H1 (cell line): ENCODE measurements at regions of chr15 and their contacts with region 1.

Region 1: DNA sequence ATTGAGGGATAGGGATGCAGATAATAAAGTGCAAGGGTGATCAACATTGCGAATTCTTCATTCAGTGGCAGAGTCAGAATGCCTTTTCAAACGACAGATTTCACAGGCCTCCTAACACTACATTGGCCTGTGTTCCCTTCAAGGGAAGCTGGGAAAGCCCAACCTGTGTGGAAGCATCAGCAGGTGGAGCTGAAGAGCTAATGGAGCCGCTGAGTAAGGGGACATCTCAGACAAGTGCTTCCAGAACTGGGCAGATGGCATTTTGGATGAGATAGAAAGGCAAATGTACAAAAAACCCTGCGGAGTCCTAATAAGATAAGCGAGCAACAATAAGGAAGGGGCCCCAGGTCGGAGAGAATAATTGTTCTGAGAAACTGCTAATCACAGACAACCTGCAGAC is 8.5 kb upstream of the SLC24A5 start:
- DNase-seq: peak; percentile 29 to 57
- H3K4me3 ChIP-seq: no peak overlapping the region
- H3K27ac ChIP-seq: no peak overlapping the region
- H3K4me1 ChIP-seq: peaks cover 1 to 6% (median 2%) of the 10 kb centered on the region in 4 experiments; a peak in 4 of 7 replicates
- H3K27me3 ChIP-seq: no peaks in the 10 kb centered on the region
- CTCF ChIP-seq: peak; percentile 71 to 84 (median 81)
- EP300 ChIP-seq: no peak
- POLR2A ChIP-seq: no peak
- RAD21 ChIP-seq: peak; percentile 84 to 89

Region 2: GRCh38 chr15:48126667-48127355 is 14.6 kb after region 1 on chr15:
- CTCF ChIA-PET with region 1: interaction called, 15 read pairs
- POLR2A ChIA-PET with region 1: no interaction called
- DNase-seq: no peak
- H3K4me3 ChIP-seq: no peak overlapping the region
- H3K27ac ChIP-seq: no peak overlapping the region
- H3K4me1 ChIP-seq: peaks cover 0 to 2% (median 0%) of the 10 kb centered on the region in 4 experiments; a peak in 1 of 7 replicates
- H3K27me3 ChIP-seq: no peaks in the 10 kb centered on the region
- CTCF ChIP-seq: no peak
- EP300 ChIP-seq: no peak
- POLR2A ChIP-seq: no peak
- RAD21 ChIP-seq: no peak

Region 3: GRCh38 chr15:48250640-48251076 is 138.4 kb after region 1 on chr15:
- CTCF ChIA-PET with region 1: interaction called, 18 read pairs
- POLR2A ChIA-PET with region 1: no interaction called
- DNase-seq: peak; percentile 5 to 47
- H3K4me3 ChIP-seq: no peak overlapping the region
- H3K27ac ChIP-seq: no peak overlapping the region
- H3K4me1 ChIP-seq: peaks cover 0 to 5% (median 0%) of the 10 kb centered on the region in 4 experiments; a peak in 1 of 7 replicates
- H3K27me3 ChIP-seq: no peaks in the 10 kb centered on the region
- CTCF ChIP-seq: peak in 2 of 3 experiments; percentile 62 to 70; a peak in 3 of 4 replicates
- EP300 ChIP-seq: no peak
- POLR2A ChIP-seq: no peak
- RAD21 ChIP-seq: peak; percentile 83 to 84

Region 4: GRCh38 chr15:48423896-48424475 is 311.7 kb after region 1 on chr15:
- CTCF ChIA-PET with region 1: no interaction called
- POLR2A ChIA-PET with region 1: no interaction called
- DNase-seq: no peak
- H3K4me3 ChIP-seq: no peak overlapping the region
- H3K27ac ChIP-seq: no peak overlapping the region
- H3K4me1 ChIP-seq: peaks cover 2 to 7% (median 3%) of the 10 kb centered on the region in 4 experiments; a peak in 4 of 7 replicates
- H3K27me3 ChIP-seq: no peaks in the 10 kb centered on the region
- CTCF ChIP-seq: no peak
- EP300 ChIP-seq: no peak
- POLR2A ChIP-seq: no peak
- RAD21 ChIP-seq: no peak